Activated CD4-positive, alpha-beta T cell treated with anti-CD3 and anti-CD28 coated beads, Interleukin-2, amount 10 ng/mL, durations not matched to agents 24 days and 14 days (primary cell): ENCODE measurements at regions of chr9 and their contacts with region 1.

Region 1: DNA sequence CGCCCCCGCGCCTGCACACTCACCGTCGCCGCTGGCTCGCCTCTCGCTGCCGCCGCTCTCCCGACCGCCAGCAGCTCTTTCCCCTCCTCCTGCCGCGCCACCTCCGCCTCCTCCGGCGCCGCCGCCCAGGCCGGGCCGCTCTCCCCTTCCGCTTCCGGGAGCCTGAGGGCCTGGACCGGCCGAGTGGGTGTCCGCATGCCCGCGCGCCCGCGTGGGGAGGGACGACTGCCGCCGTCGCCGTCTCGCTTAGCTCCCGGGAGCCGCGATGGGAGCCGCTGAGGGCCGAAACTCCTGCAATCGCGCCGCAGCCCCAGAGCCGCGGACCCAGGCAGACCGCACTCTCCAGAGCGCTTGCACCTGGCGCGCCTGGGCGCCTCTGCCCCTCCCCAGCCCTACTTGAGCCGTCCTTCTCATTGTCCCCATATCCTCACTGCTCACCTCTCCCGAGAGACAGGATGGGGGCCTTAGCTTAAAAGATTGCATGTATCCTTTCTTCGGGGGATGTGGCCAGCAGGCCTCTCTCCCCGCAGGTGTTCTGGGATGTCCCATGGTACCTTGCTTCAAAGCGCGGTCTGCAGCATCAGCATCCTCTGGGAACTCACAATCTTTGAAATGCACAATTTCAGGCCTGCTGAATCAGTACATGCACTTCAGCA is at the start of gene ZDHHC21:
- DNase-seq: peak; percentile 88
- H3K4me3 Mint-ChIP-seq: peak within 1 kb of the TSS; percentile 96
- H3K27ac Mint-ChIP-seq: peak within 1 kb of the TSS; percentile 95
- H3K4me1 Mint-ChIP-seq: peaks cover 33% of the 10 kb centered on the region
- H3K27me3 Mint-ChIP-seq: peaks cover 20% of the 10 kb centered on the region
- total RNA-seq, gene ZDHHC21: 11.2 and 11.6 TPM in 2 replicates

Region 2: GRCh38 chr9:14322211-14323082 is 370.9 kb before region 1 on chr9:
- intact Hi-C with region 1: loop called (anchors 2 kb)
- DNase-seq: peak; percentile 96
- H3K4me3 Mint-ChIP-seq: peak overlapping the region; percentile 86
- H3K27ac Mint-ChIP-seq: peak overlapping the region; percentile 76
- H3K4me1 Mint-ChIP-seq: peaks cover 21% of the 10 kb centered on the region
- H3K27me3 Mint-ChIP-seq: peaks cover 70% of the 10 kb centered on the region

Region 3: GRCh38 chr9:14573333-14573732 is 120.0 kb before region 1 on chr9:
- intact Hi-C with region 1: no loop called
- DNase-seq: no peak
- H3K4me3 Mint-ChIP-seq: no peak overlapping the region
- H3K27ac Mint-ChIP-seq: no peak overlapping the region
- H3K4me1 Mint-ChIP-seq: no peaks in the 10 kb centered on the region
- H3K27me3 Mint-ChIP-seq: peaks cover 2% of the 10 kb centered on the region

Region 4: GRCh38 chr9:14670718-14671117 is 22.6 kb before region 1 on chr9:
- intact Hi-C with region 1: loop called (anchors 2 kb)
- DNase-seq: no peak
- H3K4me3 Mint-ChIP-seq: no peak overlapping the region
- H3K27ac Mint-ChIP-seq: peak overlapping the region; percentile 48
- H3K4me1 Mint-ChIP-seq: peaks cover 6% of the 10 kb centered on the region
- H3K27me3 Mint-ChIP-seq: no peaks in the 10 kb centered on the region